PC-9 (cell line): ENCODE measurements at regions of chr1 and their contacts with region 1.

Region 1: GRCh38 chr1:55413286-55413685 is 198.1 kb upstream of the USP24 start:
- DNase-seq: no peak
- H3K4me3 ChIP-seq: no peak overlapping the region
- H3K27ac ChIP-seq: no peak overlapping the region
- H3K4me1 ChIP-seq: no peaks in the 10 kb centered on the region
- H3K27me3 ChIP-seq: no peaks in the 10 kb centered on the region
- CTCF ChIP-seq: no peak

Region 2: DNA sequence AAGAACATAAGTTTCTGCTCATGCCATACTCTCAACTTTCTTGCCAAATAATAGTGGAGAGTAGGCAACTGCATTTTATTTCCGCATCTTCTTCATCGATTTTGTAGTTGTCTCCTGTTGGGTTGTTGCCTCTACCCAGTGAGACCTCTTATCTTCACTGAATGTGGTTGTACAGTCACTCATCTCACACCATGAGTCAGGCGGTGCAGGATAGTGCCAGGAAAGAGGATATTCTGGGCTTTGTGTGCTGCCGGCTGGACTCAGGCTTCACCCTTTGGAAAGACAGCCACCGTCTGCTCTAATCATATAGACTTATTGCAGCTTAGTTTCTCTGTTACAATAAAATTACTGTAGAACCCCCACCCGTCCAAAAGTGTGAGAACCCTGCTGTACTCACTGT is 43.8 kb before region 1 on chr1:
- CTCF ChIA-PET with region 1: no interaction called
- POLR2A ChIA-PET with region 1: interaction called, 11 read pairs
- intact Hi-C with region 1: no loop called
- DNase-seq: no peak
- H3K4me3 ChIP-seq: no peak overlapping the region
- H3K27ac ChIP-seq: no peak overlapping the region
- H3K4me1 ChIP-seq: no peaks in the 10 kb centered on the region
- H3K27me3 ChIP-seq: no peaks in the 10 kb centered on the region
- CTCF ChIP-seq: no peak